Activated T-helper 2 cell treated with anti-CD3 and anti-CD28 coated beads, Interferon-gamma antibody, Interleukin-2, Interleukin-4, amounts not matched to agents 10 μg/mL and 5 μg/mL and 100 μg/mL, durations not matched to agents 14 hours and 24 hours and 36 hours (primary cell): ENCODE measurements at regions of chr16 and their contacts with region 1.

Region 1: GRCh38 chr16:53130159-53131049 is 75.6 kb downstream of the CHD9 start:
- DNase-seq: peak; percentile 91
- H3K4me3 Mint-ChIP-seq: peak overlapping the region; percentile 78
- H3K27ac Mint-ChIP-seq: peak overlapping the region; percentile 67
- H3K4me1 Mint-ChIP-seq: peaks cover 23% of the 10 kb centered on the region
- H3K27me3 Mint-ChIP-seq: no peaks in the 10 kb centered on the region

Region 2: DNA sequence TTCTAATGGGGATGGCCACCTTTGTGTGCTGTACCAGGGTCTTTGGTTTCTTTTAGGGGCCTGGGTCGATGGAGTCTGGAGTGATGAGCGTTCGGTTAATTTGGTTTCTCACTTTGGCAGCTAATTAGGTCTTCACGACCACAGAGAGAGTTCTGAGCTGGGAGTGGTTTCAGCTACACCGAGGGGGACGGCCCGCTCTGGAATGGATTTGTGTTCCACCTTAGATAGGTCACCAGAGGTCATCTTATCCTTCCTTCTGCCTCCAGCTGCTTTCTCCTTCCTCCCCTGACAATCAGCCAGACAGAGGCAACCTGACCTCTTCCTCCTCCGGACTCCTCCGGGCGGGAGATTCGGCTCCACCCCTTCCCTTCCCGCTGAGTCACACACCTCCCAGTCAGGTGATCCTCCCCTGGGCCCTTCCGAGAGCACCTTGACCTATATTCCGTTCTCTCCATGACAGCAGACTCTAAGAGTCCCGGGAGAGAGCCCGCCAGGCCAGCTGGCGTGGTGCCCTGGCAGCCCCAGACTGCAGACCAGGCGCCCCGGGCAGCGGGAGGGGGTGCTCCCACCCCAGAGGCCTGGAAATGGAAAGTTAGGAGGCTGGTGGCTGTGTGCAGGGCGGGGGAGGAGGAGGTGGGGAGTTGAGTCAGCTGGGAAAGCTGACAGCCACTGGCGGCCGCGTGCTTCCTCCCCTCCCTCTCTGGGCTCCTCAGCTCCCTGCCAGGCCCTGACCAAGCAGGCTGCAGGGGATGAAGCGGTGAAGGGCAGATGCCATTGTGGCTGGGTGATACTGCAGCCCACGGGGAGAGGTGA is 30.9 kb before region 1 on chr16:
- intact Hi-C with region 1: loop called (anchors 1 kb)
- DNase-seq: peak; percentile 37
- H3K4me3 Mint-ChIP-seq: peak overlapping the region; percentile 83
- H3K27ac Mint-ChIP-seq: peak overlapping the region; percentile 96
- H3K4me1 Mint-ChIP-seq: peaks cover 23% of the 10 kb centered on the region
- H3K27me3 Mint-ChIP-seq: no peaks in the 10 kb centered on the region

Region 3: GRCh38 chr16:53282975-53283946 is 152.9 kb after region 1 on chr16:
- intact Hi-C with region 1: loop called (anchors 1 kb)
- DNase-seq: no peak
- H3K4me3 Mint-ChIP-seq: no peak overlapping the region
- H3K27ac Mint-ChIP-seq: no peak overlapping the region
- H3K4me1 Mint-ChIP-seq: no peaks in the 10 kb centered on the region
- H3K27me3 Mint-ChIP-seq: no peaks in the 10 kb centered on the region

Region 4: GRCh38 chr16:53503270-53503923 is 373.0 kb after region 1 on chr16:
- intact Hi-C with region 1: loop called (anchors 1 kb)
- DNase-seq: peak; percentile 100
- H3K4me3 Mint-ChIP-seq: peak overlapping the region; percentile 88
- H3K27ac Mint-ChIP-seq: peak overlapping the region; percentile 91
- H3K4me1 Mint-ChIP-seq: peaks cover 45% of the 10 kb centered on the region
- H3K27me3 Mint-ChIP-seq: no peaks in the 10 kb centered on the region